ENCODE measurements at regions of chr2 and their contacts with region 1.

Region 1: GRCh38 chr2:96174251-96175144 is 29.3 kb upstream of the DUSP2 start:
- DNase-seq: no peak
- H3K4me3 ChIP-seq: no peak overlapping the region
- H3K27me3 ChIP-seq: no peaks in the 10 kb centered on the region
- CTCF ChIP-seq: peak; percentile 90

Region 2: GRCh38 chr2:96156926-96157650 is 17.4 kb before region 1 on chr2:
- CTCF ChIA-PET with region 1: interaction called, 12 read pairs
- POLR2A ChIA-PET with region 1: no interaction called
- DNase-seq: no peak
- H3K4me3 ChIP-seq: no peak overlapping the region
- H3K27me3 ChIP-seq: 0 out of 2 replicates have a peak, but pooled peaks cover 2% of the 10 kb centered on the region
- CTCF ChIP-seq: no peak

Region 3: DNA sequence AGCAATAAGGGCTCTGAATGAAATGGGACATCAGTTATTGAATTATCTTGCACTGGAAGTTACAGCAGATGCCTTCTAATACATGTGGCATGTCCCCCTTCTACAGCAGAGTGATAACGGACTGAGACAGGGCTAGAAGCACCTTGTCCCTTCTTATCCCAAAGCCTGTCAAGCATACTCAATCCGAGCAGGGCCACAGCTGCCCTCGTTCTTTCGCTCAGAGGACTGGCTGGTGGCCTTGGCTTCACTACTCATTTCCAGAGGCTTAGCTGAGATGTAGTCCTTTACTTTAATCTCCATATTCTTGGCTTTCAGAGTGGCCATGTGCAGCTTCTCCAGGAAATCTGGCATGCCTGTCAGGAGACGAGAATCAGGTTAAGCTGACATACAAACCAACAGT is 12.1 kb after region 1 on chr2:
- CTCF ChIA-PET with region 1: interaction called, 39 read pairs
- POLR2A ChIA-PET with region 1: no interaction called
- DNase-seq: no peak
- H3K4me3 ChIP-seq: no peak overlapping the region
- H3K27me3 ChIP-seq: no peaks in the 10 kb centered on the region
- CTCF ChIP-seq: no peak

Region 4: GRCh38 chr2:96245609-96246390 is 71.3 kb after region 1 on chr2:
- CTCF ChIA-PET with region 1: no interaction called
- POLR2A ChIA-PET with region 1: no interaction called
- DNase-seq: no peak
- H3K4me3 ChIP-seq: no peak overlapping the region
- H3K27me3 ChIP-seq: no peaks in the 10 kb centered on the region
- CTCF ChIP-seq: no peak